ENCODE measurements at regions of chr3 and their contacts with region 1.

Region 1: DNA sequence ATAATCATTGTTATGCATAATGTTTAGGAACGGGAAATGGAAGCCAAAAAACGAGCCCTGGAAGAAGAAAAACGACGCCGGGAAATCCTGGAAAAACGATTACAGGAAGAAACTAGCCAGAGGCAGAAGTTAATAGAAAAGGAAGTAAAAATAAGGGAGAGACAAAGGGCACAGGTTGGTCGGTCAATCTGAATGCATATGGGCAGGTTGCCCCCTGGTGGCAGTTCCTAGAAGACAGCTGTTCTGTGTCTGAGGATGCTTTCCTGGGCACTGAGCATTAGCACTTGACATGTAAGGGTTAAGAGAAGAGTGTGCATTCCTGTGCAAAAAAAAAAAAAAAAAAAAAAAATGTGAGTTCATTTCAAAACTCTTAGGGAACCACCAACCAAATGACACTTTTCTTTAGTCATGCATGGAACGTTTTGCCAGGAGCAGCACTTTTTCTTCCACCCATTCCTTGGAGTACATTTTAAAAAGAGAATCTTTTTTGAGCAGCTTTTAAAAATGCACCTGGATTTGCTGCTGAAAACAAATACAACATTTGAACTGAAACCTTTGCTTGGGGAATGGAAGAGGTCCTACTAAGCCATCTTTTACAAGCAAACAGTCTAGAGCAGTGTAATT is 11.1 kb upstream of the ABHD10 start:
- DNase-seq: peak; percentile 60 to 85 (median 75)
- ATAC-seq: peak; percentile 98
- H3K4me3 ChIP-seq: no peak overlapping the region
- H3K27ac ChIP-seq: peak overlapping the region in 1 of 2 donors; percentile 55
- H3K4me1 ChIP-seq: peaks cover 0 to 10% of the 10 kb centered on the region in 2 donors
- H3K27me3 ChIP-seq: no peaks in the 10 kb centered on the region
- CTCF ChIP-seq: peak; percentile 82 to 89

Region 2: GRCh38 chr3:111717601-111718000 is 250.2 kb before region 1 on chr3:
- intact Hi-C with region 1: loop called (anchors 2 to 10 kb)
- DNase-seq: peak in 3 of 4 donors; percentile 70 to 87 (median 73)
- ATAC-seq: peak; percentile 99
- H3K4me3 ChIP-seq: no peak overlapping the region
- H3K27ac ChIP-seq: no peak overlapping the region
- H3K4me1 ChIP-seq: peaks cover 0 to 4% of the 10 kb centered on the region in 2 donors
- H3K27me3 ChIP-seq: no peaks in the 10 kb centered on the region
- CTCF ChIP-seq: peak; percentile 83 to 89

Measured in left lung (tissue), 14 donors.